ENCODE measurements at regions of chr9 and their contacts with region 1.

Region 1: GRCh38 chr9:126398403-126399058 is 71.9 kb downstream of the MVB12B start:
- DNase-seq: peak; percentile 82
- H3K4me3 Mint-ChIP-seq: no peak overlapping the region
- H3K27ac Mint-ChIP-seq: no peak overlapping the region
- H3K4me1 Mint-ChIP-seq: peaks cover 37% of the 10 kb centered on the region
- H3K27me3 Mint-ChIP-seq: no peaks in the 10 kb centered on the region

Region 2: DNA sequence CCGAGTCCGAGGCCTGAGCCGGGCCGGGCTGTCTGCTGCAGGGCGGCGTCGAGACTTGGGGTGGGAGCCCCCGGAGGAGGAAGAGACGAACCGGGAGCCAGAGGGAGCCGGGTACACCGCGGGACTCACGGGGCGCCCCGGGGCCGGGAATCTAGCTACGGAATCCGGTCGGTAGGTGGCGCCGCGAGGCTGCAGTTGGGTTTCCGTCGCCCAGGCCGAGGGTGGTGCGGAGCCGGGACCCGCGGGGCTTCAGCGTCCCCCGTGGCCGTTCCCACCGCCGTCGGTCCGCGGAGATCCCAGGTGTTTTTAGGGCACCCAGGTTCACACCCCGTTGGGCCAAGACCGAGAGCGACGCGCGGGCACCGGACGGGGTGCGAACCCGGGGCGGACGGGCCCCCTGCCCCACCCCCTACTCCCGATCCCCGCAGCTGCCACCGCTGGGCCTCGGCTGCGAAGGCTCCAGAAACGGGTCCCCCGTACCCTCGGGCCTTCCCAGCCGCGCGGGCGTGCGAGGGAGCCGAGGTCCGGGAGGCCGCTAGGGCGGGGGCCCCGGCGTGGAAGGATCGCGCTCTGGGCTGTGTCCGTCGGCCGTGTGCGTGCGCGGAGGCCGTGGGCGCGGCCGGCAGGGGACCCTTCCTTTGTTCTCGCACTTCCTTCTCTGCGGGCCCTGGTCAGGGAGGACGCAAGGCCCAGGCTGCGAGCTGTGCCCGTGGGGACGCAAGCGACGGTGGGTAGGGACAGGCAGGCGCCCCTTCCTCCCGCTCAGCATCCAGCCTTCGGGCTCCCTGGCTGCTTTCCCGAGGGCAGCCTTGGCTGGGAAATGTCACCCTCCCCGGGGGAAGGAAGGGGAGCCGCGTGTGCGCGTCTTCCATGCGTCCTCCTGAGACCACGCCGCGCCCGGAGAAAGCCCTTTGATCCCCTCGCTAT is 990.3 kb before region 1 on chr9:
- CTCF ChIA-PET with region 1: interaction called, 27 read pairs
- POLR2A ChIA-PET with region 1: no interaction called
- intact Hi-C with region 1: loop called (anchors 10 kb)
- DNase-seq: peak; percentile 82
- H3K4me3 Mint-ChIP-seq: peak overlapping the region; percentile 52
- H3K27ac Mint-ChIP-seq: no peak overlapping the region
- H3K4me1 Mint-ChIP-seq: peaks cover 10% of the 10 kb centered on the region
- H3K27me3 Mint-ChIP-seq: peaks cover 24% of the 10 kb centered on the region

Region 3: GRCh38 chr9:126317513-126317912 is 81.0 kb before region 1 on chr9:
- CTCF ChIA-PET with region 1: interaction called, 14 read pairs
- POLR2A ChIA-PET with region 1: interaction called, 3 read pairs
- intact Hi-C with region 1: no loop called
- DNase-seq: peak; percentile 38
- H3K4me3 Mint-ChIP-seq: no peak overlapping the region
- H3K27ac Mint-ChIP-seq: no peak overlapping the region
- H3K4me1 Mint-ChIP-seq: peaks cover 3% of the 10 kb centered on the region
- H3K27me3 Mint-ChIP-seq: no peaks in the 10 kb centered on the region

Region 4: GRCh38 chr9:126411225-126411947 is 12.9 kb after region 1 on chr9:
- CTCF ChIA-PET with region 1: interaction called, 19 read pairs
- POLR2A ChIA-PET with region 1: no interaction called
- intact Hi-C with region 1: loop called (anchors 2 kb)
- DNase-seq: peak; percentile 56
- H3K4me3 Mint-ChIP-seq: peak overlapping the region; percentile 42
- H3K27ac Mint-ChIP-seq: peak overlapping the region; percentile 61
- H3K4me1 Mint-ChIP-seq: peaks cover 27% of the 10 kb centered on the region
- H3K27me3 Mint-ChIP-seq: no peaks in the 10 kb centered on the region

Region 5: GRCh38 chr9:126471084-126471624 is 72.6 kb after region 1 on chr9:
- CTCF ChIA-PET with region 1: interaction called, 9 read pairs
- POLR2A ChIA-PET with region 1: no interaction called
- intact Hi-C with region 1: loop called (anchors 1 kb)
- DNase-seq: peak; percentile 92
- H3K4me3 Mint-ChIP-seq: peak overlapping the region; percentile 51
- H3K27ac Mint-ChIP-seq: peak overlapping the region; percentile 49
- H3K4me1 Mint-ChIP-seq: peaks cover 48% of the 10 kb centered on the region
- H3K27me3 Mint-ChIP-seq: peaks cover 7% of the 10 kb centered on the region

Region 6: GRCh38 chr9:127104465-127105311 is 706.2 kb after region 1 on chr9:
- CTCF ChIA-PET with region 1: no interaction called
- POLR2A ChIA-PET with region 1: no interaction called
- intact Hi-C with region 1: no loop called
- DNase-seq: no peak
- H3K4me3 Mint-ChIP-seq: no peak overlapping the region
- H3K27ac Mint-ChIP-seq: no peak overlapping the region
- H3K4me1 Mint-ChIP-seq: no peaks in the 10 kb centered on the region
- H3K27me3 Mint-ChIP-seq: no peaks in the 10 kb centered on the region

Region 7: GRCh38 chr9:127578955-127579853 is 1180.7 kb after region 1 on chr9:
- CTCF ChIA-PET with region 1: no interaction called
- POLR2A ChIA-PET with region 1: no interaction called
- intact Hi-C with region 1: no loop called
- DNase-seq: peak; percentile 90
- H3K4me3 Mint-ChIP-seq: peak overlapping the region; percentile 72
- H3K27ac Mint-ChIP-seq: peak overlapping the region; percentile 80
- H3K4me1 Mint-ChIP-seq: peaks cover 31% of the 10 kb centered on the region
- H3K27me3 Mint-ChIP-seq: peaks cover 2% of the 10 kb centered on the region

Measured in activated CD4-positive, alpha-beta memory T cell treated with anti-CD3 and anti-CD28 coated beads for 36 hours (primary cell).